Ascending aorta (tissue), 2 donors: ENCODE measurements at regions of chr12 and their contacts with region 1.

Region 1: DNA sequence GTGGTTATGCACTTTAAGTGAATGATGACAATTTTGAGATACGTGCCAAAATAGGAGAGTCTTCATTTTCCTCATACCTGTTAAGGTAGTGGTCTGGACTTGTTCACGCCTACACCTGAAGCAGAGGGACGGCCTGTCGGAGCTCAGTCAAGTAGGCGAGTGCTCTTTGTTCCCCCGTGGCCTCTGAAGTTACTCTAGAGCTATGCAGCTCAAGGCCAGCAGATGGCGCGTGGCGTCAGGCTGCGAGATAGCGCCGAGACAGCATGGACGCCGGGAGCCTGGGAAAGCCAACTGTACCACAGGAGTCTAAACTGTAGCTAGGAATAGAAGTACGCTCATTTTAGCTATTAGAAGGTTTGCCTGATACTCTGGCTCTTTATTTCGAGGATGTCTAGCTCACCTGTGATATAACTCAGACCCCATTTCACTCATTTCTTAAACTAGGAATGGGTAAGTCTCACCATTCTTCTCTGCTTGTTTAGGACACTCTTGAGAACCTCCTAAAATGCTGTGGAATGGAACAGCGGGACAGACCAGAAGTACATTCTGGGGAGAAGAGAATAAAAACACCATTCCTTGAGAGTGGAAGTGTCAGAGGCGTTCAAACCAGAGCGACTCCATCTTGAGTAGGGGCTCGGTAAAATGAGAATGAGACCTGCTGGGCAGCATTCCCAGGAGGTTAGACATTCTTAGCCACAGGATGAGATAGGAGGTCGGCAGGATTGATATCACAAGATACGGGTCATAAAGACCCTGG is 267.4 kb upstream of the HMGA2 start:
- DNase-seq: peak; percentile 9 to 84
- H3K4me3 ChIP-seq: no peak overlapping the region
- H3K27ac ChIP-seq: no peak overlapping the region
- H3K4me1 ChIP-seq: no peaks in the 10 kb centered on the region
- H3K27me3 ChIP-seq: no peaks in the 10 kb centered on the region
- CTCF ChIP-seq: peak; percentile 59 to 95 (median 86)

Region 2: GRCh38 chr12:65602610-65603295 is 45.9 kb after region 1 on chr12:
- intact Hi-C with region 1: loop called (anchors 2 kb)
- DNase-seq: peak; percentile 10 to 82
- H3K4me3 ChIP-seq: peak overlapping the region in 1 of 2 donors; percentile 47
- H3K27ac ChIP-seq: peak overlapping the region; percentile 35 to 47
- H3K4me1 ChIP-seq: peaks cover 3 to 4% of the 10 kb centered on the region in 2 donors
- H3K27me3 ChIP-seq: no peaks in the 10 kb centered on the region
- CTCF ChIP-seq: peak; percentile 71 to 77 (median 76)

Region 3: DNA sequence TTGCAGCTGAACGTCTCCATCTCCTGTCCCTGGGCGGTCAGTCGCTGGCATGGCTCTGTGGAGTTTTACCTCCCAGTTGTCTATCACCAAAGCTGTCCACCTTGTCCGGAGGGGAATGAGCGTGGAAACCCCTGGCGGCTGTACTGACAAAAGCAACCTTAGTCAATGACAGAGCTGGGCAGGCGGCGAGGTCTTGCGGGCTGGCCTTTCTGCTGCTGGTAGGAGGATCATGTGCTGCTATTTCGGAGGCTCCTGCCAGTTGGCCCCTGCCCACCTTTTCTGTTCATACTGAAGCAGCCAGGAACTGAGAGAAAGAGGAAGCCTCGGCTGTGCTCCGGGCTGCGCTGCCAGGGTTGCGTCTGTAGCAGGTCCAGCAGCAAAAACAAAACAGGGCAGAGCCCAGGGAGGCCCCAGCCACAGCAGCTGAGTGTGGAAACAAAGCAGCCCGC is 325.1 kb after region 1 on chr12:
- intact Hi-C with region 1: loop called (anchors 5 kb)
- DNase-seq: peak; percentile 33 to 85
- H3K4me3 ChIP-seq: peak overlapping the region; percentile 50 to 51
- H3K27ac ChIP-seq: peak overlapping the region; percentile 2 to 56
- H3K4me1 ChIP-seq: peaks cover 5 to 13% of the 10 kb centered on the region in 2 donors
- H3K27me3 ChIP-seq: no peaks in the 10 kb centered on the region
- CTCF ChIP-seq: peak in 1 of 3 experiments; percentile 14

Region 4: DNA sequence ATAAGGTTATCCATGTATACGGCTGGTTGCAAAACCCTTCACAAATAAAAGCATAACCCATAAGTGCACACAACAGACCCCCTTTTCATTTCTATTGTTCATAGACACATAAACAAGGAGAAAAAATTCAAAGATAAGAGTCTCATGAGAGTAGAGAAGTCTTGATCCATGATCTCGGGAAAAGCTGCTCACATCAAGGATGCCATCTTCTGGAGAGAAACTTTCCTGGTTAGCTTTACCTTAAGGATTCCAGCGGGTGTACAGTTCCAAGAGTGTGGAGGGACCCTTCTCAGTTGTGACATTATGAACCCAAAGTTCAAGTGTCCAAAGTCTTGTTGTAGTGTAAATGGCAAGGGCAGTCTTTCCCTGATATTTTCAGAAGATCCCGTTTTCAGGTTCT is 429.2 kb after region 1 on chr12:
- intact Hi-C with region 1: loop called (anchors 2 kb)
- DNase-seq: no peak
- H3K4me3 ChIP-seq: no peak overlapping the region
- H3K27ac ChIP-seq: no peak overlapping the region
- H3K4me1 ChIP-seq: no peaks in the 10 kb centered on the region
- H3K27me3 ChIP-seq: no peaks in the 10 kb centered on the region
- CTCF ChIP-seq: no peak

Region 5: GRCh38 chr12:66087365-66087943 is 530.6 kb after region 1 on chr12:
- intact Hi-C with region 1: loop called (anchors 1 kb)
- DNase-seq: peak in 1 of 2 donors; percentile 79
- H3K4me3 ChIP-seq: no peak overlapping the region
- H3K27ac ChIP-seq: no peak overlapping the region
- H3K4me1 ChIP-seq: peaks cover 0 to 5% of the 10 kb centered on the region in 2 donors
- H3K27me3 ChIP-seq: no peaks in the 10 kb centered on the region
- CTCF ChIP-seq: peak; percentile 51 to 79 (median 63)

Region 6: DNA sequence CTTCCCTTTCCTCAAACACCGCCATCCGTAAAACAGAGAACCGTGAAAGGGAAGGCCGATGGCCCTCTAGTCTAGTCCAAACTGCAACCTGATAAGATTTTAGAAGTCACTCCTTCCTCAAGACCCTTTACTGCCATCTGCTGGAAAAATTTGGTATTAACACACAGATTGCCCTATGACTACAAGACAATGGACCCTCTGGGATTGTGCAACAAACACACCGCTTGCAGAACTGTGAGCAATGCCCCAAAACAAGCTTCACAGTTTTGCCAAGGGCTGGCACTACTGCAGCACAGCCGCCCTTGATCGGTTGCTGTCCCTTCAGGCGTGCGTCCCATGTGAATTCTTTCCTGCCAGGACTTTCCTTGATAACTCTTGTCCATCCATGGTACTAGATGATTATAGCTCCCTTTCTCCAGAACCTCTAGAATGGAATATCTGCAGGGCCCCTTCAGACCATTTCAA is 550.6 kb after region 1 on chr12:
- intact Hi-C with region 1: loop called (anchors 1 kb)
- DNase-seq: peak in 1 of 2 donors; percentile 83
- H3K4me3 ChIP-seq: no peak overlapping the region
- H3K27ac ChIP-seq: no peak overlapping the region
- H3K4me1 ChIP-seq: no peaks in the 10 kb centered on the region
- H3K27me3 ChIP-seq: no peaks in the 10 kb centered on the region
- CTCF ChIP-seq: peak; percentile 72 to 85 (median 79)